Activated T-helper 1 cell treated with anti-CD3 and anti-CD28 coated beads, Interleukin-12 subunit alpha, Interleukin-12 subunit beta, Interleukin-2, Interleukin-4 antibody, amounts not matched to agents 30 ng/mL and 10 ng/mL and 1 ng/mL, durations not matched to agents 14 hours and 24 hours and 36 hours (primary cell): ENCODE measurements at regions of chr3 and their contacts with region 1.

Region 1: GRCh38 chr3:111338059-111338698 is 203.8 kb upstream of the CD96 start:
- DNase-seq: peak; percentile 12
- H3K4me3 Mint-ChIP-seq: no peak overlapping the region
- H3K27ac Mint-ChIP-seq: no peak overlapping the region
- H3K4me1 Mint-ChIP-seq: peaks cover 26% of the 10 kb centered on the region
- H3K27me3 Mint-ChIP-seq: no peaks in the 10 kb centered on the region

Region 2: GRCh38 chr3:110814170-110815007 is 523.8 kb before region 1 on chr3:
- intact Hi-C with region 1: loop called (anchors 5 kb)
- DNase-seq: peak; percentile 9
- H3K4me3 Mint-ChIP-seq: peak overlapping the region; percentile 37
- H3K27ac Mint-ChIP-seq: peak overlapping the region; percentile 70
- H3K4me1 Mint-ChIP-seq: peaks cover 22% of the 10 kb centered on the region
- H3K27me3 Mint-ChIP-seq: peaks cover 11% of the 10 kb centered on the region

Region 3: DNA sequence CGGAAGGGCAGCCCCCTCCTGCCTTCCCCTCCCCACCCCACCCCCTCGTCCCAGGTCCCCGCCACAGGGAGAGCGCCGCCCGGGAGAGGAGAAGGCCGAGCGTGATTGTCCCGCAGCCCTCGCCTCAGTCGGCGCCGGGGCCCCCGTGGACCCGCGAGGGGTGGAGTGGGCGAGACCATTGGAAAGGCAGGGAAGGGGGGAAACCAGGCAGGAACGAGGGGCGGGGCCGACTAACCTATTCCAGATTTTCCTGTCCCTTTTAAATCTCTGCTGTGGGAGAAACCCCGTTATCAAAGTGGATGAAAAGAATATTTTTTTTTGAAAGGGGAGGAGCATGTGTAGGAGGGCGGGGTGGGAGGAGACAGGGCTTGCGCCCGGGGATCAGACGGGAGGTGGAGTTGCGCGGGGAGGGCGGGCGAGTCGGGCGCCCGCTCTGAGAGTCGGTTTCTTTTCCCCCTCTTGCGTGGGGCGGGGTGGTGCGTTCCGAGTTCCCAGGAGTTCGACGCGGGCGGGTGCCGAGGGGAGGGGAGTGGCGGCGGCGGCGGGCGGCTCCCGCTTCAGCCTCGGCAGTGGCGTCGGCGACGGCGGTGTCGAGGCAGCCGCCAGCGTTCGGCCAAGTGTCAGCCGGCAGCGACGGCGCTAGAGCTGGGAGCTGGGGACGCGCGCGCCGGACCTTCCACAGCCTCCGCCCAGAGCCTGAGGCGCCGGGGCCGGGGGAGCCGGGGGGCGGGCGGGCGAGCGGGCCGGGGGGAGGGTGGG is 266.7 kb before region 1 on chr3 and contains the start of gene NECTIN3:
- intact Hi-C with region 1: loop called (anchors 1 kb)
- DNase-seq: peak; percentile 77
- H3K4me3 Mint-ChIP-seq: peak within 1 kb of the TSS; percentile 91
- H3K27ac Mint-ChIP-seq: peak within 1 kb of the TSS; percentile 90
- H3K4me1 Mint-ChIP-seq: peaks cover 28% of the 10 kb centered on the region
- H3K27me3 Mint-ChIP-seq: peaks cover 55% of the 10 kb centered on the region
- total RNA-seq, gene NECTIN3: 3.5 and 4.6 TPM in 2 replicates

Region 4: DNA sequence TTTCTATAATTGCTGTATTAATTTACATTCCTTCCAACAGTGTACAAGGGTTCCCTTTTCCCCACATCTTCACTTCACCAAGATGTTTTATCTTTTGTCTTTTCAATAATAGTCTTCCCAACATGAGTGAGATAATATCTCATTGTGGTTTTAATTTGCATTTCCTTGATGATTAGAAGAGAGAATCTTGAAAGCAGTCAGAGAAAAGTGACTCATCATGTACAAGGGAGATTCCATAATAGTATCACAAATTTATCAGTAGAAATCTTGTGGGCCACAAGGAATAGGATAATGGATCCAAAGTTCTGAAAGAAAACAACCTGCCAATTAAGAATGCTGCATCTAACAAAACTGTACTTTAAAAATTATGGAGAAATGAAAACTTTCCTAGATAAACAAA is 77.3 kb before region 1 on chr3:
- intact Hi-C with region 1: loop called (anchors 2 kb)
- DNase-seq: no peak
- H3K4me3 Mint-ChIP-seq: peak overlapping the region; percentile 5
- H3K27ac Mint-ChIP-seq: peak overlapping the region; percentile 51
- H3K4me1 Mint-ChIP-seq: peaks cover 28% of the 10 kb centered on the region
- H3K27me3 Mint-ChIP-seq: peaks cover 7% of the 10 kb centered on the region

Region 5: DNA sequence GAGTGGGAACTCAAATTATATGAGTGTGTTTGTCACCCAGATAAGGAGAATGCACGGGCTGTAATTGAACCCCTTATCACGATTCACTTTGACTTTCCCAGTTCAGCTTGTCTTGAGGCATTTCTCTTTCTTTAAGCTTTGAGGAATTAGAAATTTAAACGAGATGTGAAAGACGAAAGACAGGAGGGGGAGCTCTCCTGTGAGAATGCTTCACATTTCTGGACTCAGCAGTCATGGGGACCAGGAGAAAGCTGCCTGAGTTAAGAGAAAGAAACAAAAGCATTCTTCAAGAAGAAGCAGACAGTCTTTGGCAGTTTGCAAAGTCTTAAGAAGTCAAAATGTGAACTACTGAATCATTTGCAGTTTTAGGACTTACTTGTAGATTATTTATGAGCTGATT is 61.0 kb before region 1 on chr3:
- intact Hi-C with region 1: no loop called
- DNase-seq: no peak
- H3K4me3 Mint-ChIP-seq: no peak overlapping the region
- H3K27ac Mint-ChIP-seq: no peak overlapping the region
- H3K4me1 Mint-ChIP-seq: peaks cover 37% of the 10 kb centered on the region
- H3K27me3 Mint-ChIP-seq: peaks cover 9% of the 10 kb centered on the region

Region 6: GRCh38 chr3:111326144-111326995 is 11.8 kb before region 1 on chr3:
- intact Hi-C with region 1: loop called (anchors 1 kb)
- DNase-seq: no peak
- H3K4me3 Mint-ChIP-seq: no peak overlapping the region
- H3K27ac Mint-ChIP-seq: peak overlapping the region; percentile 38
- H3K4me1 Mint-ChIP-seq: peaks cover 36% of the 10 kb centered on the region
- H3K27me3 Mint-ChIP-seq: no peaks in the 10 kb centered on the region